ENCODE measurements at regions of chr16 and their contacts with region 1.

Region 1: DNA sequence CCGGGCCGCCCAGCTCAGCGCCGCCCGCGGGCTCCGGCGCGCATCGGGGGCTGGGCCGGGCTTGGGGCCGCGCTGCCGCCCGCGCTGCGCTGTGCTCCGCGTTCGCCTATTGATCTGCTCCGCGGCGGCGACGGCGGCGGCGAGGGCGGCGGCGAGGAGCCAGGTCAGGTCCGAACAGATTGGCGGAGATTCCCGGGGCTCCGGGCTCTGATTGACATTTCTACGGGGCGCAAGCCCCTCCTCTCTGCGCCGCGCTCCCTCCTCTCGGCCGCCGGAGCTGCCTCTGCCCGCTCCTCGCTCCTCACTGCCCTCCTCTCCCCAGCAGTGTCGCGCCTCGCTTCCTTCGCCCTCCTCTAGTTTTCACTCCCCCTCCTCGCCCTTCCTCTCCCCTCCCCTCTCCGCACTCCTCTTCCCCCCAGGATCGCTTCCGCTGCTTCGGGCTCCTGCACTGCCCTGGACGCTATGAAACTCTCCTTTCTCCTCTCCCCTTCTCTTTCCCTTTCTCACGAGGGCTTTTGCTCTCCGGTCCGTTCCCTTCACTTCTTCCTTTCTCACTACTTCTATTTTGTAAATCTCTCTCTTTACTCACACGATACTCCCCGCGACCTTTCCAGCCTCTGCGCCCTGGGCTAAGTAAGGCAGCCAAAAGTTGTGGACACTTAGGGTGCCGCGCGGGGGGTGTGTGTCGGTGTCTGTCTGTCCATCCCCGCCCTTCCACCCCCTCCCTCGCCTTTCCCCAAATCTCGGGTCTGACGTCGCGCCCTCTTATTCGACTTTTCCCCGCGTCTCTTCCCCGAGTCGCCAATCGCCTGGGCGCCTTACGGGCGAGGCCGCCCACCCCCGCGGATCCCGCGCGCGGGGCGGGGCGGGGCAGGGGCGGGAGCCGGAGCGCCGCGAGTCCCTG is at the start of gene IRX3:
- DNase-seq: peak; percentile 90 to 96 (median 91)
- ATAC-seq: peak; percentile 80 to 82 (median 80)
- H3K4me3 ChIP-seq: peak within 1 kb of the TSS; percentile 62 to 94 (median 76)
- H3K27ac ChIP-seq: peak within 1 kb of the TSS; percentile 76 to 98 (median 94)
- H3K4me1 ChIP-seq: peaks cover 0 to 29% (median 12%) of the 10 kb centered on the region in 12 donors
- H3K27me3 ChIP-seq: peaks cover 0 to 98% (median 9%) of the 10 kb centered on the region in 9 donors
- CTCF ChIP-seq: no peak
- POLR2A ChIP-seq: peak in 1 of 2 donors; percentile 59
- total RNA-seq, gene IRX3: 28.6 to 101 (median 46.0) TPM

Region 2: DNA sequence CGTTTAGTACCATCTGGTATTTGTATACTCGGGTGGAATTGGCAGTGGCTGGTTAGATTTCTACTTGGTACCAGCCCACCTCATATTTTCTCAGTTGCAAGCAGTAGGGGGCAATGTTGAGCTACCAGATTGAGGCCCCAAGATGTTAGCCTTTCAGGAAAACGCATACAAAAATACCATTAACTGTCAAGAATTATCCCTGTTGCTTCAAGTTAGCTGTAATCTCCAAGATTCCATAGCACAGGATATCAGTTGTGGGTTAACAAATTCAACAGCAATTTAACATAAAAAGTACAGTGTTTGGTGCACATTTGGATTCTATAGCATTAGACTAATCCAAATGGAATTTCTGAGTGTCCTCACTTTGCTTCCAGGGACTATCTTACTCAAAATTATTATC is 394.2 kb before region 1 on chr16:
- intact Hi-C with region 1: loop called in 5 of 10 experiments (anchors 5 to 10 kb)
- DNase-seq: peak in 2 of 5 donors; percentile 32 to 48
- ATAC-seq: peak in 3 of 4 donors; percentile 66 to 74 (median 69)
- H3K4me3 ChIP-seq: no peak overlapping the region
- H3K27ac ChIP-seq: no peak overlapping the region
- H3K4me1 ChIP-seq: peaks cover 3 to 45% (median 24%) of the 10 kb centered on the region in 12 donors
- H3K27me3 ChIP-seq: no peaks in the 10 kb centered on the region
- CTCF ChIP-seq: peak; percentile 59 to 83 (median 74)
- POLR2A ChIP-seq: no peak

Region 3: DNA sequence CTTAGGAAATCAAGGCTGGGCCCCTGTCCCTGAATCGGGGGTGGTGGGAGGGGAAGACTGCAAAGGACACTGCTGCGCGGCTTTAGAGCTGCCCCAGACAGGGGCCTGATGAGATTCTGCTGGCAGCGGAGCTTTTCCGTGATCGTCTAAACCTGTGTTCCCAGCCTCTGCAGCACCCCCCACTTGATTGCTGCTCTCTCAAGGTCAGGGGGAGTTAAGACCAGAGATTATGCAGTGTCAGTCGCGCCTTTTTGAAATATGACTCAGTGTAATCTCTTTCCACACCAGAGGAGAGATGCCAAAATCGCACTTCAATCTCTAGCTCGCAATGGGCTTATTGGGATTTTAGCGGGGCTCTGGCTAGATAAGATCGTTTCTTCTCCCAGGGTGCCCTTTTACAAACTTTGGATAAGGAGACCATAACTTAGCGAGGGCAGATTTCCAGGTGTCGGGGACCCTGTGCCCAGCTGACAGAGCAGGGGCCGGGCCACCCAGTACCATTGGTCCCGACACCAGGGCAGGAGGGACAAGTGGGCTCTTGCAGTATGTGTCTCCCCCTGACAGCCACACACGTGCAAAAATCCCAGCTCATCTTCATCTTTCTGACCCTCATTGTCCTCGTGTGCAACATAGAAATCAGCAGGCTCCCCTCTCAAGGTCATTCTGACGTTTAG is 86.7 kb before region 1 on chr16:
- intact Hi-C with region 1: loop called in 7 of 10 experiments (anchors 1 to 5 kb)
- DNase-seq: no peak
- ATAC-seq: peak in 1 of 4 donors; percentile 12
- H3K4me3 ChIP-seq: no peak overlapping the region
- H3K27ac ChIP-seq: no peak overlapping the region
- H3K4me1 ChIP-seq: peaks cover 0 to 21% (median 3%) of the 10 kb centered on the region in 12 donors
- H3K27me3 ChIP-seq: no peaks in the 10 kb centered on the region
- CTCF ChIP-seq: no peak
- POLR2A ChIP-seq: no peak

Region 4: DNA sequence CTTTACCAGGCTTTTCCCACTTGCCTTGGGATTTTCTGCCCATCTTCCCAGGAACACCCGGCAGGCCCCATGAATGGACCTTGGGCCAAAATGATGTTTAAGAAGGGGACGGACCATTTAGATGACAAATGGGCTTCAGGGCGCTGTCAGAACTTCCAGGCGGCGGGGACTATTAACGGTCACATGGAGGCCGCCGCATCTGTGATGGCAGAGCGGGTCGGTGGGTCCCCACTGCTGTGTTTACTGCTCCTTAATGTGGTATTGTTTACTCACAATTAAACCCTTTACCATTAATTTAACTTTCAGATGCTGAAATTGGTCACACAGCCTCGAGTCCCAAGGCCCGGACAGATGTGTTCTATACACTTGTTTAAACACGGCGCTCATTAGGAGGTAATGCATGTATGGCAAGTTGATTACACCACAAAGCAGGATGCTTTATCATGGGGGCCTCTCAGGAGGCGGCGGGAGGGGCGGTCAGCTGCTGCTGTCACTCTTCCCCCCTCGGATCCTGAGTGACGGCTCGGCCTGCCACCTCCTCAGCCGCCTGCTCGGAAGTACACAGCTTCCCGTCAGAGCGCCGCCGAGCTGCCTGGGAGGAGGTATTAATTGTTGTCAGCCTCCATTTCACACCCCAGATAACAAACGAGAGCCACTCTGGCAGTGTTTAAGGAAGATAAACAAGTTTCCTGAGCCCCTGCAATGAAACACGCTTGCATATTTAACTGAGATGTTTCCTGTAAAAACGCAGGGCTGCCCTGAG is 84.1 kb after region 1 on chr16:
- intact Hi-C with region 1: no loop called
- DNase-seq: peak in 3 of 5 donors; percentile 19 to 71 (median 43)
- ATAC-seq: peak in 3 of 4 donors; percentile 82 to 85 (median 83)
- H3K4me3 ChIP-seq: peak overlapping the region in 1 of 12 donors; percentile 17
- H3K27ac ChIP-seq: peak overlapping the region in 2 of 12 donors; percentile 18 to 42
- H3K4me1 ChIP-seq: peaks cover 0 to 11% (median 0%) of the 10 kb centered on the region in 12 donors
- H3K27me3 ChIP-seq: peaks cover 0 to 24% (median 0%) of the 10 kb centered on the region in 9 donors
- CTCF ChIP-seq: no peak
- POLR2A ChIP-seq: no peak

Region 5: GRCh38 chr16:54503011-54503855 is 216.9 kb after region 1 on chr16:
- intact Hi-C with region 1: loop called in 7 of 10 experiments (anchors 2 to 10 kb)
- DNase-seq: peak; percentile 69 to 92 (median 76)
- ATAC-seq: peak; percentile 91 to 96 (median 94)
- H3K4me3 ChIP-seq: no peak overlapping the region
- H3K27ac ChIP-seq: peak overlapping the region in 8 of 12 donors; percentile 54 to 87 (median 70)
- H3K4me1 ChIP-seq: peaks cover 0 to 65% (median 31%) of the 10 kb centered on the region in 12 donors
- H3K27me3 ChIP-seq: no peaks in the 10 kb centered on the region
- CTCF ChIP-seq: no peak
- POLR2A ChIP-seq: no peak

Region 6: DNA sequence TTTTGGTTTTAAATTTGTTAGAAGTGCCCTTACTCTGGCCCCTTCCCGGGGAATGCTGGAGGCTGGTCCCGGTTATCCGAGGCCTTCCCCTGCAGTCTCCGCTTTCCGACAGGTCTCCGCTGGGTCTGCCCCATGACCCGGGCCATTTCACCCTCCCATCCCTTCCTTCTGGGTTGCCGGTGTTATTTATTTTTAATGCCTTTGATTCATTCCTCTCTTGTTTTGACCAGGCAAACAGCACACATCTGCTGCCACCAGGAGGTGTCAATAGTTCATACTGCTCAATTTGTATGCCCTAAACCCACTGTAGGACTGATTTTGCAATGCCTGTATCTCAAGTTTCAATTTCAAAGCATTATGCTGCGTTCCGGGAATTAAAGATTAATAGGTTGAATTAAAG is 531.1 kb after region 1 on chr16:
- intact Hi-C with region 1: loop called in 8 of 10 experiments (anchors 2 to 10 kb)
- DNase-seq: peak in 2 of 5 donors; percentile 8 to 33
- ATAC-seq: peak in 3 of 4 donors; percentile 47 to 69 (median 69)
- H3K4me3 ChIP-seq: no peak overlapping the region
- H3K27ac ChIP-seq: no peak overlapping the region
- H3K4me1 ChIP-seq: peaks cover 0 to 6% (median 0%) of the 10 kb centered on the region in 12 donors
- H3K27me3 ChIP-seq: peaks cover 0 to 7% (median 0%) of the 10 kb centered on the region in 9 donors
- CTCF ChIP-seq: peak in 9 of 12 donors; percentile 6 to 55 (median 42)
- POLR2A ChIP-seq: no peak

Region 7: DNA sequence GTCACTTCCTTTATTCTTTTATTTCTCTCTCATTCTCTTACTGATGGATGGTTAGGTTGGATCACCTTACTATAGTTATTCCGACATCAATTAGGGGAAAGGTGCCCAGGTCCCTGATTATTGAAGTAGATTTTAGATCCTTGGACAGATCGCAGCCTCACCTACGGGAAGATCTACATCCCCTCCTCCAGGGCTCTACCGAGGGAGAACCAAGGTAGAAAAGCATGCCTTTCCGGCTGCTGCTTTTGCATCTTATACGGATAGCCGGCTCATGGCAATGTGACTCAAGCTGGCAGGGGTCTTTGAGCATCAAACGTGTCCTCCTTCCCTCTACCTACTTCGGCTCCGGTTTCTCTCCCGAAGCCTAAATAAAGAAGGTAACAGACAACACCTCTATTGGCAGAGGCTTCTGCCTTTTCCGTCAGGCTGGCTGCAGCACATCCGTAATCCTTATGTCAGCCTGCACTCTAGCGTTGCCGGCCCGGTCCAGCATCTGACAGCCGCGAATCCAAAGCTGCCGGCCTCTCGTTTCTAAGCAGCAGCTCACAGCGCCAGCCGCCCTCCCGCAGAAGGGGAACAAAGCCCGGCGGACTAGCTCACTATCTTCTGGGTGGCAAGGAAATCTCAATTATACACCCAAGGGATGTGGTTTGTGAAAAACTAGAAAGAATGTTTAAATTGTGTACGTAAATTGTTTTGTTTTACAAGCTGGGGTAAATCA is 1084.6 kb after region 1 on chr16:
- intact Hi-C with region 1: loop called in 1 of 10 experiments (anchors 10 kb)
- DNase-seq: peak; percentile 76 to 86 (median 83)
- ATAC-seq: peak; percentile 65 to 86 (median 82)
- H3K4me3 ChIP-seq: peak overlapping the region in 6 of 12 donors; percentile 8 to 26 (median 16)
- H3K27ac ChIP-seq: peak overlapping the region in 8 of 12 donors; percentile 55 to 93 (median 88)
- H3K4me1 ChIP-seq: peaks cover 0 to 60% (median 30%) of the 10 kb centered on the region in 12 donors
- H3K27me3 ChIP-seq: peaks cover 0 to 35% (median 0%) of the 10 kb centered on the region in 9 donors
- CTCF ChIP-seq: peak; percentile 26 to 78 (median 59)
- POLR2A ChIP-seq: peak in 1 of 2 donors; percentile 26